ENCODE measurements at regions of chr12 and their contacts with region 1.

Region 1: DNA sequence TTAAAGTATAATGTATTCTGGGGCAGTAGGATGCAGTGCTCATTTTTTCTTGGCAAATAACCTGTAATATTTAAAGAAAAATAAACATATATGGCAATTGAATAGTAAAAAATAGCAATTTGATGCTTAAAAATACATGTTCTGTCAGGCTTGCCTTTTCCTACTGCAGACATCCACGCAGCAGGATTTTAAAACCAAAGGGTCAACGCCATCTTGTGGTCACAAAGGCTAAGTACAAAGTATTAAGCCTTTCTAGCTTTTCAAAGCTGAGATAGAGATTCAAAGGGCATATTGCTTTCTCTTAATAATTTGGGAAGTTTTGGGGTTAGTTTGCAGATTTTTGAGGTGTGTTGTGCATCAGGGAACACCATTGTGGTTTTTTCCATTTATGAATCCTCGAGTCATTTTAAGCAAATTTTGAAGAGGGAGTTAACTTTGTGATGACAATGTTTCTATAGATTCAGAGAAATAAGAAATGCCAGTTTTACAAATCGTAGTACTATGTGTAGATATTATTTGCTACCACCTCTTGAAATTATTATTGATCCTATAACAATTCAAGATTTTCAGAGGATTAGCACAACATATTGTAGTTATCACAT is 4.7 kb upstream of the CCER1 start:
- DNase-seq: no peak
- H3K4me3 ChIP-seq: no peak overlapping the region
- H3K27ac ChIP-seq: no peak overlapping the region
- H3K4me1 ChIP-seq: no peaks in the 10 kb centered on the region
- H3K27me3 ChIP-seq: no peaks in the 10 kb centered on the region
- CTCF ChIP-seq: peak; percentile 61 to 62

Region 2: GRCh38 chr12:89542912-89543592 is 1416.6 kb before region 1 on chr12:
- intact Hi-C with region 1: loop called (anchors 5 kb)
- DNase-seq: peak; percentile 57 to 69
- H3K4me3 ChIP-seq: no peak overlapping the region
- H3K27ac ChIP-seq: no peak overlapping the region
- H3K4me1 ChIP-seq: peaks cover 0 to 20% (median 9%) of the 10 kb centered on the region in 4 donors
- H3K27me3 ChIP-seq: no peaks in the 10 kb centered on the region
- CTCF ChIP-seq: peak; percentile 74 to 81

Region 3: GRCh38 chr12:90801776-90802175 is 157.9 kb before region 1 on chr12:
- intact Hi-C with region 1: no loop called
- DNase-seq: no peak
- H3K4me3 ChIP-seq: no peak overlapping the region
- H3K27ac ChIP-seq: no peak overlapping the region
- H3K4me1 ChIP-seq: no peaks in the 10 kb centered on the region
- H3K27me3 ChIP-seq: no peaks in the 10 kb centered on the region
- CTCF ChIP-seq: no peak

Region 4: GRCh38 chr12:91261820-91262676 is 302.4 kb after region 1 on chr12:
- intact Hi-C with region 1: no loop called
- DNase-seq: no peak
- H3K4me3 ChIP-seq: no peak overlapping the region
- H3K27ac ChIP-seq: no peak overlapping the region
- H3K4me1 ChIP-seq: peaks cover 0 to 7% (median 2%) of the 10 kb centered on the region in 4 donors
- H3K27me3 ChIP-seq: no peaks in the 10 kb centered on the region
- CTCF ChIP-seq: no peak

Region 5: GRCh38 chr12:91529829-91530228 is 570.2 kb after region 1 on chr12:
- intact Hi-C with region 1: no loop called
- DNase-seq: no peak
- H3K4me3 ChIP-seq: no peak overlapping the region
- H3K27ac ChIP-seq: no peak overlapping the region
- H3K4me1 ChIP-seq: no peaks in the 10 kb centered on the region
- H3K27me3 ChIP-seq: no peaks in the 10 kb centered on the region
- CTCF ChIP-seq: no peak

Measured in tibial artery (tissue), 4 donors.